ENCODE measurements at regions of chr10 and their contacts with region 1.

Region 1: DNA sequence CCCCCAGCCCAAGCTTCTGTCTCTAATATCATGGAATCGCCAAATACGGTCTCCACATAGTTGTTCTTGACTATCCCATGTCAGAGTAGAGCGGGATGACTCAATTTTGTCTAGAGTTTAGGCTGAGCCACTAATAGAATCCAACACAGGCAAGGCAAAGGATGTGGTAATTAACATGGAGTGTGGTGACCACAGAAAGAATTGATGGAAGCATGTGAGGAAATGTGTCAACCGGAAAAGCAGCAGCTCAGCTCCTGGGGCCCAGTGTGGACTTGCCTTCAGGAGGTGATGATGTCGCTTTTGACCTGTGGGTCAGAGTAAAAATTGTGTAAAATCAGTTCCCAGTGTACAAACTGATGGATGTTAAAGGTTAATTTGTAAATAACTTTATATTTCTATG is 139.3 kb upstream of the KLF6 start:
- DNase-seq: peak; percentile 98
- H3K4me3 ChIP-seq: no peak overlapping the region
- H3K27ac ChIP-seq: peak overlapping the region; percentile 99
- H3K4me1 ChIP-seq: peaks cover 29% of the 10 kb centered on the region
- H3K27me3 ChIP-seq: no peaks in the 10 kb centered on the region
- CTCF ChIP-seq: no peak
- POLR2A ChIP-seq: peak; percentile 32

Region 2: GRCh38 chr10:3805791-3806461 is 118.4 kb before region 1 on chr10:
- CTCF ChIA-PET with region 1: no interaction called
- POLR2A ChIA-PET with region 1: no interaction called
- dilution Hi-C with region 1: no loop called
- intact Hi-C with region 1: loop called (anchors 1 kb)
- DNase-seq: peak; percentile 96
- H3K4me3 ChIP-seq: peak overlapping the region in 1 of 3 experiments; percentile 31
- H3K27ac ChIP-seq: peak overlapping the region; percentile 100
- H3K4me1 ChIP-seq: peaks cover 70% of the 10 kb centered on the region
- H3K27me3 ChIP-seq: no peaks in the 10 kb centered on the region
- CTCF ChIP-seq: no peak
- POLR2A ChIP-seq: peak; percentile 29

Region 3: GRCh38 chr10:3852147-3852904 is 72.0 kb before region 1 on chr10:
- CTCF ChIA-PET with region 1: no interaction called
- POLR2A ChIA-PET with region 1: interaction called, 4 read pairs
- dilution Hi-C with region 1: no loop called
- intact Hi-C with region 1: loop called (anchors 1 kb)
- DNase-seq: peak; percentile 98
- H3K4me3 ChIP-seq: no peak overlapping the region
- H3K27ac ChIP-seq: peak overlapping the region; percentile 93
- H3K4me1 ChIP-seq: peaks cover 23% of the 10 kb centered on the region
- H3K27me3 ChIP-seq: no peaks in the 10 kb centered on the region
- CTCF ChIP-seq: no peak
- POLR2A ChIP-seq: no peak

Region 4: DNA sequence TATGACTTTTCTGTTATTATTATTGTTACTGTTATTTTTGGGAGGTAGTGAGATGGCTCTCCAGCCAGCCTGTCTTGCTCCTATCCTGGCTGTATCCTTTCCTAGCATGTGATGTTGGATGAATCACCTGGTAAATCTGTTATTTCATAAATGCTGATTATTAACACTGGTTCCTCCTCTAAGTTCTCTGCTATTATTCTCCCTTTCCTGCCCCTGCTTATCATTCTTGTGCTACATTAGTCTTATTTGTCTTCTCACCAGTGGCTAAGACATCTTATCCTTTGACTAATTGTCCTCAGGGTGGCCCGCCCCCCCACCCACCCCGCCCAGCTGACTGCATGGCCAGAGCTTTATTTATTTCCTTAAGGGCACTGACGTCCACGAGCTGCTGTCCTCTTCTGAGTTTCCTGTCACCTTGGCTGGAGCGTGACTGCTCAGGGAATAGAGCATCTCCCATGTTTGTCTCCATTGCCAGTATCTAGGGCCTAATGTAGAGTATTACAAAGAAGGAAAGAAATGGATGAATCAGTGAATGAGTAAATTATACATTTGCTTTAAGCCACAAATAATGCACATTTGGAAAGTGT is 29.2 kb before region 1 on chr10:
- CTCF ChIA-PET with region 1: interaction called, 3 read pairs
- POLR2A ChIA-PET with region 1: interaction called, 3 read pairs
- dilution Hi-C with region 1: no loop called
- intact Hi-C with region 1: loop called (anchors 1 kb)
- DNase-seq: peak; percentile 89
- H3K4me3 ChIP-seq: no peak overlapping the region
- H3K27ac ChIP-seq: peak overlapping the region; percentile 93
- H3K4me1 ChIP-seq: peaks cover 54% of the 10 kb centered on the region
- H3K27me3 ChIP-seq: no peaks in the 10 kb centered on the region
- CTCF ChIP-seq: no peak
- POLR2A ChIP-seq: no peak

Region 5: GRCh38 chr10:3948843-3949242 is 24.5 kb after region 1 on chr10:
- CTCF ChIA-PET with region 1: no interaction called
- POLR2A ChIA-PET with region 1: no interaction called
- dilution Hi-C with region 1: no loop called
- intact Hi-C with region 1: no loop called
- DNase-seq: peak; percentile 83
- H3K4me3 ChIP-seq: no peak overlapping the region
- H3K27ac ChIP-seq: no peak overlapping the region
- H3K4me1 ChIP-seq: peaks cover 5% of the 10 kb centered on the region
- H3K27me3 ChIP-seq: no peaks in the 10 kb centered on the region
- CTCF ChIP-seq: no peak
- POLR2A ChIP-seq: no peak

Region 6: GRCh38 chr10:4344511-4344994 is 420.2 kb after region 1 on chr10:
- CTCF ChIA-PET with region 1: no interaction called
- POLR2A ChIA-PET with region 1: no interaction called
- dilution Hi-C with region 1: no loop called
- intact Hi-C with region 1: loop called (anchors 1 kb)
- DNase-seq: no peak
- H3K4me3 ChIP-seq: no peak overlapping the region
- H3K27ac ChIP-seq: no peak overlapping the region
- H3K4me1 ChIP-seq: peaks cover 5% of the 10 kb centered on the region
- H3K27me3 ChIP-seq: no peaks in the 10 kb centered on the region
- CTCF ChIP-seq: no peak
- POLR2A ChIP-seq: no peak

Region 7: DNA sequence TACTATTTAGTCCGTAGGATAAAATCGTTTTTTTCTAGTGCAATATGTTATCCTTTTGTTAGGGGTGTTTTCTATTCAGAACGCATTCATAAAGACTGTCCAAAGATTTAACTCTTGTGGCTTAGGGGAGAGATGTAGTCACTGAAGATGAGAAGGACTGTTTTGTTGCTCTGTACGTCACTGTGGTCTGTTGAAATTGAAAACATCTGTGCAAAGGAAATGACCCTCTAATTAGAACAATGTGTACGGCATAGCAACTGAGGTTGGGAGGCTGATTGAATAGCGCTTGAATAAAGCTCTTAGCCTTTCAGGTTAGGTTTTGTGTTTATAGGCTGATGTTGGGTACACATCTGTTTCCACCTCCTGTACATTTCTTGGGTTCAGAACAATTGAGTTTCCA is 448.3 kb after region 1 on chr10:
- CTCF ChIA-PET with region 1: no interaction called
- POLR2A ChIA-PET with region 1: no interaction called
- dilution Hi-C with region 1: no loop called
- intact Hi-C with region 1: loop called (anchors 5 kb)
- DNase-seq: peak; percentile 93
- H3K4me3 ChIP-seq: no peak overlapping the region
- H3K27ac ChIP-seq: peak overlapping the region; percentile 91
- H3K4me1 ChIP-seq: peaks cover 14% of the 10 kb centered on the region
- H3K27me3 ChIP-seq: no peaks in the 10 kb centered on the region
- CTCF ChIP-seq: no peak
- POLR2A ChIP-seq: no peak